ENCODE measurements at regions of chr3 and their contacts with region 1.

Region 1: GRCh38 chr3:31531992-31532586 is 636 bp upstream of the STT3B start:
- DNase-seq: peak; percentile 96 to 99 (median 98)
- ATAC-seq: peak; percentile 91
- H3K4me3 ChIP-seq: peak overlapping the region; percentile 76
- H3K4me3 Mint-ChIP-seq: peak overlapping the region in 7 of 10 donors; percentile 96 to 100 (median 98)
- H3K27ac ChIP-seq: peak overlapping the region; percentile 94
- H3K27ac Mint-ChIP-seq: peak overlapping the region; percentile 95 to 99 (median 98)
- H3K4me1 ChIP-seq: peaks cover 4 to 31% of the 10 kb centered on the region in 2 donors
- H3K4me1 Mint-ChIP-seq: peaks cover 0 to 25% (median 18%) of the 10 kb centered on the region in 7 donors
- H3K27me3 ChIP-seq: no peaks in the 10 kb centered on the region
- H3K27me3 Mint-ChIP-seq: no peaks in the 10 kb centered on the region

Region 2: GRCh38 chr3:30606301-30607031 is 925.6 kb before region 1 on chr3 and contains the start of gene TGFBR2:
- CTCF ChIA-PET with region 1: no interaction called
- POLR2A ChIA-PET with region 1: interaction called, 3 read pairs
- intact Hi-C with region 1: loop called (anchors 2 to 5 kb)
- DNase-seq: peak; percentile 57 to 85 (median 69)
- ATAC-seq: peak; percentile 84
- H3K4me3 ChIP-seq: peak within 1 kb of the TSS; percentile 76
- H3K4me3 Mint-ChIP-seq: peak within 1 kb of the TSS; percentile 88 to 100 (median 99)
- H3K27ac ChIP-seq: peak within 1 kb of the TSS; percentile 91
- H3K27ac Mint-ChIP-seq: peak within 1 kb of the TSS; percentile 93 to 100 (median 98)
- H3K4me1 ChIP-seq: peaks cover 32 to 39% of the 10 kb centered on the region in 2 donors
- H3K4me1 Mint-ChIP-seq: peaks cover 45 to 68% (median 55%) of the 10 kb centered on the region in 7 donors
- H3K27me3 ChIP-seq: no peaks in the 10 kb centered on the region
- H3K27me3 Mint-ChIP-seq: no peaks in the 10 kb centered on the region
- total RNA-seq, gene TGFBR2: 63.0 to 171 (median 155) TPM

Region 3: GRCh38 chr3:31067009-31067408 is 465.1 kb before region 1 on chr3:
- CTCF ChIA-PET with region 1: no interaction called
- POLR2A ChIA-PET with region 1: no interaction called
- intact Hi-C with region 1: no loop called
- DNase-seq: no peak
- ATAC-seq: no peak
- H3K4me3 ChIP-seq: no peak overlapping the region
- H3K4me3 Mint-ChIP-seq: no peak overlapping the region
- H3K27ac ChIP-seq: no peak overlapping the region
- H3K27ac Mint-ChIP-seq: no peak overlapping the region
- H3K4me1 ChIP-seq: no peaks in the 10 kb centered on the region
- H3K4me1 Mint-ChIP-seq: peaks cover 0 to 2% (median 0%) of the 10 kb centered on the region in 7 donors
- H3K27me3 ChIP-seq: no peaks in the 10 kb centered on the region
- H3K27me3 Mint-ChIP-seq: peaks cover 0 to 7% (median 0%) of the 10 kb centered on the region in 5 donors

Region 4: GRCh38 chr3:31232055-31233025 is 299.7 kb before region 1 on chr3:
- CTCF ChIA-PET with region 1: interaction called, 3 read pairs
- POLR2A ChIA-PET with region 1: interaction called, 47 read pairs
- intact Hi-C with region 1: loop called in 1 of 2 experiments (anchors 2 kb)
- DNase-seq: no peak
- ATAC-seq: peak; percentile 74
- H3K4me3 ChIP-seq: no peak overlapping the region
- H3K4me3 Mint-ChIP-seq: peak overlapping the region; percentile 7 to 68 (median 62)
- H3K27ac ChIP-seq: no peak overlapping the region
- H3K27ac Mint-ChIP-seq: peak overlapping the region; percentile 30 to 95 (median 67)
- H3K4me1 ChIP-seq: peaks cover 34 to 64% of the 10 kb centered on the region in 2 donors
- H3K4me1 Mint-ChIP-seq: peaks cover 59 to 81% (median 76%) of the 10 kb centered on the region in 7 donors
- H3K27me3 ChIP-seq: no peaks in the 10 kb centered on the region
- H3K27me3 Mint-ChIP-seq: no peaks in the 10 kb centered on the region

Region 5: DNA sequence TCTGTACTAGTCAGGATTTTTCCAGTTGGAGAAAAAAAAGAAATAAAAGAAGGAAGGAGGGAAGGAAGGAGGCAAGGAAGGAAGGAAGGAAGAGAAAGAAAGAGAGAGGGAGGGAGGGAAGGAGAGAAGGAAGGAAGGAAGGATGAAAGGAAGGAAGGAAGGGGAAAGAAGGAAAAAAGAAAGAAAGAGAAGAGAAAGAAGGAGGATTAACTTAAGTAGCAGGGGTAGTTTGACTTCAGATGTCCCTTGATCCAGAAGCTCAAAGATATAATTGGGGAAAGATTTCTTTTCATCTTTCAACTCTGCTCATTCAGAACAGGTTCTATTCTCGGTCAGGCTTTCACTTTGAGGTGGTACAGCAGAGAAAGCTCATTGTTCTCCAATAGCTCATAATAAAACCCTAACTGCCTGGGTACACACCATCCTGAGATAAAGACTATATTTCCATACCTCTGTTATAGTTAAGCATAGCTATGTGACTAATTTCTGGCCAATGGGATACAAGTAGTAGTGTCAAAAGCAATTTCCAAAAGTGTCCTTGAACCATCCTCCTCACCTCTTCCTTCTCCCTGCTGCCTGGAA is 22.9 kb before region 1 on chr3:
- CTCF ChIA-PET with region 1: interaction called, 3 read pairs
- POLR2A ChIA-PET with region 1: interaction called, 13 read pairs
- intact Hi-C with region 1: no loop called
- DNase-seq: no peak
- ATAC-seq: no peak
- H3K4me3 ChIP-seq: no peak overlapping the region
- H3K4me3 Mint-ChIP-seq: peak overlapping the region in 8 of 10 donors; percentile 10 to 61 (median 47)
- H3K27ac ChIP-seq: no peak overlapping the region
- H3K27ac Mint-ChIP-seq: peak overlapping the region in 8 of 9 donors; percentile 5 to 87 (median 50)
- H3K4me1 ChIP-seq: peaks cover 21 to 33% of the 10 kb centered on the region in 2 donors
- H3K4me1 Mint-ChIP-seq: peaks cover 40 to 54% (median 49%) of the 10 kb centered on the region in 7 donors
- H3K27me3 ChIP-seq: no peaks in the 10 kb centered on the region
- H3K27me3 Mint-ChIP-seq: peaks cover 0 to 4% (median 0%) of the 10 kb centered on the region in 5 donors

Region 6: GRCh38 chr3:31755926-31756658 is 224.0 kb after region 1 on chr3:
- CTCF ChIA-PET with region 1: no interaction called
- POLR2A ChIA-PET with region 1: no interaction called
- intact Hi-C with region 1: loop called in 1 of 2 experiments (anchors 2 kb)
- DNase-seq: peak in 2 of 9 donors; percentile 22 to 39
- ATAC-seq: peak; percentile 18
- H3K4me3 ChIP-seq: no peak overlapping the region
- H3K4me3 Mint-ChIP-seq: peak overlapping the region in 9 of 10 donors; percentile 15 to 79 (median 49)
- H3K27ac ChIP-seq: no peak overlapping the region
- H3K27ac Mint-ChIP-seq: peak overlapping the region in 5 of 9 donors; percentile 0 to 95 (median 13)
- H3K4me1 ChIP-seq: peaks cover 0 to 4% of the 10 kb centered on the region in 2 donors
- H3K4me1 Mint-ChIP-seq: peaks cover 8 to 54% (median 14%) of the 10 kb centered on the region in 7 donors
- H3K27me3 ChIP-seq: no peaks in the 10 kb centered on the region
- H3K27me3 Mint-ChIP-seq: no peaks in the 10 kb centered on the region

Region 7: GRCh38 chr3:32302601-32303398 is 770.7 kb after region 1 on chr3:
- CTCF ChIA-PET with region 1: no interaction called
- POLR2A ChIA-PET with region 1: no interaction called
- intact Hi-C with region 1: loop called in 1 of 2 experiments (anchors 10 kb)
- DNase-seq: peak in 1 of 9 donors; percentile 12
- ATAC-seq: no peak
- H3K4me3 ChIP-seq: peak overlapping the region; percentile 8
- H3K4me3 Mint-ChIP-seq: peak overlapping the region; percentile 72 to 88 (median 80)
- H3K27ac ChIP-seq: peak overlapping the region; percentile 66
- H3K27ac Mint-ChIP-seq: peak overlapping the region; percentile 94 to 99 (median 96)
- H3K4me1 ChIP-seq: peaks cover 29 to 33% of the 10 kb centered on the region in 2 donors
- H3K4me1 Mint-ChIP-seq: peaks cover 27 to 79% (median 70%) of the 10 kb centered on the region in 7 donors
- H3K27me3 ChIP-seq: no peaks in the 10 kb centered on the region
- H3K27me3 Mint-ChIP-seq: no peaks in the 10 kb centered on the region

Region 8: DNA sequence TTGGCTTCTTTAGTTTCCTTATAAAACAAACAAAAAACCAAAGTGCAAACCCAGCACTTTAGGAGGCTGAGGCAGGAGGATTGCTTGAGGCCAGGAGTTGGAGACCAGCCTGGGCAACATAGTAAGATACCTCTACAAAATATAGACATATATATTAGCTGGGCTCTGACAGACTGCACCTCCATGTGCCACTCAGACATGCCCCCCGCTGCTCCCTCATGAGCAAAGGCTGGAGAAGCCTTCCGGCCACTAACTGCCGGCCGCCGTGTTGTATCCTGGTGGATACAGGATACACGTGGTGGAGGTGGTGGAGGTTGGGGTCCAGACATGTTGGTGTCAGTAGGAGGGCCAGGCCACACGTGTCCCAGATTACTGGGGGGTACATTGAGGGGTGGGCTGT is 1390.0 kb after region 1 on chr3:
- CTCF ChIA-PET with region 1: no interaction called
- POLR2A ChIA-PET with region 1: no interaction called
- intact Hi-C with region 1: no loop called
- DNase-seq: no peak
- ATAC-seq: no peak
- H3K4me3 ChIP-seq: no peak overlapping the region
- H3K4me3 Mint-ChIP-seq: no peak overlapping the region
- H3K27ac ChIP-seq: no peak overlapping the region
- H3K27ac Mint-ChIP-seq: no peak overlapping the region
- H3K4me1 ChIP-seq: no peaks in the 10 kb centered on the region
- H3K4me1 Mint-ChIP-seq: no peaks in the 10 kb centered on the region
- H3K27me3 ChIP-seq: no peaks in the 10 kb centered on the region
- H3K27me3 Mint-ChIP-seq: peaks cover 0 to 18% (median 0%) of the 10 kb centered on the region in 5 donors

Region 9: DNA sequence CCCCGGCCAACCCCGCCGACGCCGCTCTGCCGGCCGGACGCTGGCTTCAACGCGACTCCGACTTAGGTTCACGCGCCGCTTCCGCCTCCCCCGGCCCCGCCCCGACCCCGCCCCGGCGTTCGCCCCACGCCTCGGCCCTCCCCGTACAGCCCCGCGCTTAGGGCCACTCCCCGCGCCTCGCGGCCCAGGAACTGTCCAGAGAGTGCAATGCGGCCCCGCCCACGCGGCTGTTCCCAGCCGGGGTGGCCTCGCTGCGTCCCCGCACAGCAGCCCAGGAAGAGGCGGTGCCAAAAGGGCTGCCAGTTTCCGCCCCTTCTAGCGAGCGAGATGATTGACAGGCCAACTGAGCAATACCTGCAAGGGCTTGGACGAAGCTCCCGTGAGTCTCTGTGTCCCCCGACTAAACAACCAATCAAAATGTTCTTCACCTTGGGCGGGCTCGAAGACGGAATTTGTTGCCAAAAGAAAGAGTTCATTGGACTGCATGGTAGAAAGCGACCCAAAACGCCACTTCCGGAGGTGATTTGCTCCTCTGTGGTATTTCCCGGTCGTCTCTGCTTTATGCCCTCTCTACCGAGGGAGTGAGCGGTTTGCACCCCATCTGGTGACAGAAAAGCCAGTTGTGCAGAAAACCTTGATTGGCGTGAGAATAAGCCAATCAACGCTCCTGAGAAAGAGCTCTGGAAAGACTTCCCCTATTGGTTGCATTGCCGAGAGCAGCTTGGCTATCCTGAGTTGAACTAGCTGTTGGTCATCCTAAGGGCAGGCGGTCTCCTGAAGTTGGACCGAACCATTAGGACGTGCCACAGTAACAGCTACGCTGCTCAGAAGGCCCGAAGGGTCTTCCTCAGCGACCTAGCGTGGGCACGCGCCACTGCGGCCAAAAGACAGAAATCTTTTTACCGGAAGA is 1908.5 kb after region 1 on chr3 and contains the start of gene UBP1:
- CTCF ChIA-PET with region 1: no interaction called
- POLR2A ChIA-PET with region 1: no interaction called
- intact Hi-C with region 1: loop called in 1 of 2 experiments (anchors 5 kb)
- DNase-seq: peak; percentile 90 to 99 (median 97)
- ATAC-seq: peak; percentile 91
- H3K4me3 ChIP-seq: peak within 1 kb of the TSS; percentile 82
- H3K4me3 Mint-ChIP-seq: peak within 1 kb of the TSS; percentile 93 to 100 (median 100)
- H3K27ac ChIP-seq: peak within 1 kb of the TSS; percentile 91
- H3K27ac Mint-ChIP-seq: peak within 1 kb of the TSS; percentile 99 to 100 (median 100)
- H3K4me1 ChIP-seq: peaks cover 30 to 35% of the 10 kb centered on the region in 2 donors
- H3K4me1 Mint-ChIP-seq: peaks cover 28 to 56% (median 53%) of the 10 kb centered on the region in 7 donors
- H3K27me3 ChIP-seq: no peaks in the 10 kb centered on the region
- H3K27me3 Mint-ChIP-seq: no peaks in the 10 kb centered on the region
- total RNA-seq, gene UBP1: 61.4 to 116 (median 86.0) TPM